Breast epithelium (tissue), 4 donors: ENCODE measurements at regions of chr16 and their contacts with region 1.

Region 1: DNA sequence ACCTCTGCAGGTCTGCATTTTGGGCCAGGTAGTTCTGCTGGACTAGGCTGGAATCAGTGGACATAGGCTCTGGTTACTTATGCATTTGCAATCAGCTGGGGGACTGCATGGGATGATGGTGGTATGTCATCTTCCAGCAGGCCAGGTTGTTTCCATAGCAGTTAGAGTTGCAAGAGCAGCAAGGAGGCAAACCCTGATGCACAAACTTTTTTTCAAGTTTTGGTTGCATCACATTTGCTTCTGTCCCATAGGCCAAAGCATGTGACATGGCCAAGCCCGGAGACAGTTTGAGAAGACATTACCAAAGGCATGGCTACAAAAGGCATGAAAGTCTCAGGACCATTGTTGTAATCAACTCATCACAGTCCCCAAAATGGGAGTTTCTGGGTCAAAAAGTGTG is 58.2 kb downstream of the PRKCB start:
- DNase-seq: no peak
- H3K4me3 ChIP-seq: no peak overlapping the region
- H3K27ac ChIP-seq: no peak overlapping the region
- H3K4me1 ChIP-seq: no peaks in the 10 kb centered on the region
- H3K27me3 ChIP-seq: no peaks in the 10 kb centered on the region
- CTCF ChIP-seq: no peak
- POLR2A ChIP-seq: no peak

Region 2: GRCh38 chr16:25523183-25523582 is 1629.2 kb after region 1 on chr16:
- intact Hi-C with region 1: loop called (anchors 5 kb)
- DNase-seq: no peak
- H3K4me3 ChIP-seq: no peak overlapping the region
- H3K27ac ChIP-seq: no peak overlapping the region
- H3K4me1 ChIP-seq: no peaks in the 10 kb centered on the region
- H3K27me3 ChIP-seq: no peaks in the 10 kb centered on the region
- CTCF ChIP-seq: no peak
- POLR2A ChIP-seq: no peak